ENCODE measurements at regions of chr7 and their contacts with region 1.

Region 1: GRCh38 chr7:101941481-101942383 is 124.3 kb downstream of the CUX1 start:
- DNase-seq: peak in 3 of 5 donors; percentile 54 to 72 (median 62)
- H3K4me3 ChIP-seq: no peak overlapping the region
- H3K27ac ChIP-seq: peak overlapping the region; percentile 14 to 58
- H3K4me1 ChIP-seq: peaks cover 21% of the 10 kb centered on the region
- H3K27me3 ChIP-seq: no peaks in the 10 kb centered on the region
- CTCF ChIP-seq: no peak
- EP300 ChIP-seq: no peak
- POLR2A ChIP-seq: no peak

Region 2: DNA sequence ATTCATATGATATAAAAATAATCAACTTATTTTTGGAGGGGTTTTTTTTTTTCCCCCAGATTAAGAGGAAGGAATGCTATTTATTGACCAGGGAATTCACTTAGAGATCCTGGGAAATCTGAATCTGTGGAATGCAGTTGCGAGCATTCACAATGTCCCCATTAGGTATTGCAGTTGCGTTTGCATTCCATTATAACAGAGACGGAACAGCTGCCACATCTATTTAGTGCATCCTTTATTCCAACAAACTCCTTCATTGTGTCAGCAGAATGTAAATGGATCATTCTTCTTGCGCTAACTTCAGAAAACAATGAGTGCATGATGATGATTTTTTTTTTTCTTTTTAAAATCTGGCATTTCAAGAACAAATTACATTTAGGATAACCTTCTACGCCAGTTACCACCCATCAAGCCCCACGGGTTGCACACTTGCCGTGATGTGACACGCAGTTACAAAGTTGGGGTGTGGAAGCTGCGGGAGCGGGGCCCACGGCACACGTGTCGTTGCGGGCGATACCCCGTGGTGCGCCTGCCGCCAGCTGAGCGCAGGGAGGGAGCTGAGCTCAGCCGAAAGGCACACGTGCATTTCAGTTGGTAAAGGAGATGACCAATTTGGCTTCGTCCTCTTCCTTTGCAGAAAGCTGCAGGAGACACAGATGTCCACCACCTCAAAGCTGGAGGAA is 169.5 kb after region 1 on chr7:
- intact Hi-C with region 1: loop called in 1 of 4 experiments (anchors 10 kb)
- DNase-seq: peak in 1 of 5 donors; percentile 32
- H3K4me3 ChIP-seq: no peak overlapping the region
- H3K27ac ChIP-seq: no peak overlapping the region
- H3K4me1 ChIP-seq: peaks cover 1% of the 10 kb centered on the region
- H3K27me3 ChIP-seq: no peaks in the 10 kb centered on the region
- CTCF ChIP-seq: no peak
- EP300 ChIP-seq: no peak
- POLR2A ChIP-seq: no peak